Activated CD4-positive, alpha-beta memory T cell treated with anti-CD3 and anti-CD28 coated beads for 36 hours (primary cell): ENCODE measurements at regions of chr7 and their contacts with region 1.

Region 1: DNA sequence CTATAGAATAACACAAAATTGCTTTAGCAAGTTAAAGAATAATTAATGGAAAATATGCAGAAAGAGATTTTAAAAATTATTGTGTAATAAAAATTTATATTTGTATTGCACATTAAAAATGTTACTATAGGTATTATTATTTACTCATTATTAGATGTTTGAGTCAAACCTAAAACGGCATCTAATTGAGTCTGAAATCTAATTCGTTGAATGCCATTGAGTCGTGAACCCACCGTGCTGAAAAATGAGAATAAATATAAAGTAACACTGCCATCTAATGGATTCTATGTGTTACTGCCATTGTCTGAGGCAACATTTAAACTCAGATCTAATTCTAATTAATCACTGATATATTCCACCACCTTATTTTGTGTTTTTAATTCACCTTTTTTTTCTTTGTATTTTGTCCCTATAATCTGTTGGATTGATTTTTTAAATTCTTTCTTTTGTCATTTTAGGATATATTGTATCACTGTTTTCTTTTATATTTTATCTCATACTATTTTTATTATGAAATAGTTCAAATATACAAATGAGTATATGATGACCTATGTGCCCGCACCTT is 62.2 kb downstream of the SAMD9 start:
- DNase-seq: no peak
- H3K4me3 Mint-ChIP-seq: no peak overlapping the region
- H3K27ac Mint-ChIP-seq: no peak overlapping the region
- H3K4me1 Mint-ChIP-seq: peaks cover 17% of the 10 kb centered on the region
- H3K27me3 Mint-ChIP-seq: peaks cover 6% of the 10 kb centered on the region

Region 2: DNA sequence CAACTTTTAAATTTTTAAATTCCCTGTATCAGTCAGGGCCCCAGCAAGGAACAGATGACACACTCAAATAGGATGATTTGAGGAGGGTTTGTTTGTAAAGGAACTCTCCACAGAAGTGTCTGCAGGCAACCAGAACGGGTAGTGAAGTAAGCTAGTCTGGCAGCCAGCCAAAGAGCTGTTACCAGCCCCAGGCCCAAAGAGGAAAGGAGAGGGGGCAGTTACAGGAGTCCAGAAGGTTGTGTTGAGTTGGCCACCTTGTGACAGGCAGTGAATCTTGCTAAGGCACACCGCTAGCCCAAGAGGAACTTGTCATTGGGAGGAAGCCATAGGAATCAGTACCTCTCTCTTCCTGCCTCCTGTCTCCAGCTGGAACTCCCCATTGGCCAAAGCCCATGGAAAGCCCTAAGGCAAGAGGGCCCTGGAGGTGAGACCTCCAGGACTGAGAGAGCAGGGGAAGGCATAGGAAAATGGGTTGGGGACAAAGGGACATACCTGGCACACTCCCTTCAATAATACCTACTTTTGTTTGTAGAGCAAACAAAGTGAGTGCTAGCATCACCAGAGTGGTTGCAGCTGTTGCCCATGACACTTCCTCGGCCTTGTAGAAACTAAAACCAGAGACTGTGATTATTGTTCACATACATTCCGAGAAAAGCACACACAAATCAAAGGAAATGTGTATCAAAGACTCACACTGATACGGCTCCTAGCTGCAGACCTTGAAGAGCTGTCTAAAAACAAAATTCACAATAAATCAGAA is 633.8 kb before region 1 on chr7:
- CTCF ChIA-PET with region 1: no interaction called
- POLR2A ChIA-PET with region 1: no interaction called
- intact Hi-C with region 1: loop called (anchors 5 kb)
- DNase-seq: no peak
- H3K4me3 Mint-ChIP-seq: no peak overlapping the region
- H3K27ac Mint-ChIP-seq: no peak overlapping the region
- H3K4me1 Mint-ChIP-seq: peaks cover 10% of the 10 kb centered on the region
- H3K27me3 Mint-ChIP-seq: peaks cover 13% of the 10 kb centered on the region

Region 3: GRCh38 chr7:92621026-92621540 is 434.5 kb before region 1 on chr7:
- CTCF ChIA-PET with region 1: interaction called, 6 read pairs
- POLR2A ChIA-PET with region 1: no interaction called
- intact Hi-C with region 1: loop called (anchors 1 kb)
- DNase-seq: peak; percentile 86
- H3K4me3 Mint-ChIP-seq: peak overlapping the region; percentile 49
- H3K27ac Mint-ChIP-seq: peak overlapping the region; percentile 93
- H3K4me1 Mint-ChIP-seq: peaks cover 53% of the 10 kb centered on the region
- H3K27me3 Mint-ChIP-seq: no peaks in the 10 kb centered on the region

Region 4: DNA sequence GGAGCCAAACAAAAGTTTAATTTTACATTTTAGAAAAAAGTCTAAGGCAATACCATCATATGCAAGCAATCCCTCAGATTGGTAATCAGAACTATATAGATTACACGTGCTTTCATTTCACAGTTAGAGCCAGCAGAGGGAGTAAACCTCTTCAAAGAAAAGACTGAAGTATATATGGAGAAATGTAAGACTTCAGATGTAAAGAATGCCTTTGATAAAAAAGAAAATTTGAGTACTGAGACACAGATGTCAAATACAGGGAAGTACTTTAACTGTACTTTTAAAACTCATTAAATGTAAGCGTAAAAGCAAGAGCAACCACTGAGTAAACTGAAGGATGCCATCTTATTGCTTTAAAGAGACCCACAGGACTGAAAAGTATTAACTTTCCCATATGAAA is 364.0 kb before region 1 on chr7:
- CTCF ChIA-PET with region 1: no interaction called
- POLR2A ChIA-PET with region 1: no interaction called
- intact Hi-C with region 1: loop called (anchors 2 kb)
- DNase-seq: no peak
- H3K4me3 Mint-ChIP-seq: no peak overlapping the region
- H3K27ac Mint-ChIP-seq: peak overlapping the region; percentile 83
- H3K4me1 Mint-ChIP-seq: peaks cover 60% of the 10 kb centered on the region
- H3K27me3 Mint-ChIP-seq: no peaks in the 10 kb centered on the region

Region 5: GRCh38 chr7:92843034-92843760 is 212.4 kb before region 1 on chr7:
- CTCF ChIA-PET with region 1: no interaction called
- POLR2A ChIA-PET with region 1: no interaction called
- intact Hi-C with region 1: no loop called
- DNase-seq: no peak
- H3K4me3 Mint-ChIP-seq: no peak overlapping the region
- H3K27ac Mint-ChIP-seq: no peak overlapping the region
- H3K4me1 Mint-ChIP-seq: peaks cover 8% of the 10 kb centered on the region
- H3K27me3 Mint-ChIP-seq: peaks cover 9% of the 10 kb centered on the region

Region 6: DNA sequence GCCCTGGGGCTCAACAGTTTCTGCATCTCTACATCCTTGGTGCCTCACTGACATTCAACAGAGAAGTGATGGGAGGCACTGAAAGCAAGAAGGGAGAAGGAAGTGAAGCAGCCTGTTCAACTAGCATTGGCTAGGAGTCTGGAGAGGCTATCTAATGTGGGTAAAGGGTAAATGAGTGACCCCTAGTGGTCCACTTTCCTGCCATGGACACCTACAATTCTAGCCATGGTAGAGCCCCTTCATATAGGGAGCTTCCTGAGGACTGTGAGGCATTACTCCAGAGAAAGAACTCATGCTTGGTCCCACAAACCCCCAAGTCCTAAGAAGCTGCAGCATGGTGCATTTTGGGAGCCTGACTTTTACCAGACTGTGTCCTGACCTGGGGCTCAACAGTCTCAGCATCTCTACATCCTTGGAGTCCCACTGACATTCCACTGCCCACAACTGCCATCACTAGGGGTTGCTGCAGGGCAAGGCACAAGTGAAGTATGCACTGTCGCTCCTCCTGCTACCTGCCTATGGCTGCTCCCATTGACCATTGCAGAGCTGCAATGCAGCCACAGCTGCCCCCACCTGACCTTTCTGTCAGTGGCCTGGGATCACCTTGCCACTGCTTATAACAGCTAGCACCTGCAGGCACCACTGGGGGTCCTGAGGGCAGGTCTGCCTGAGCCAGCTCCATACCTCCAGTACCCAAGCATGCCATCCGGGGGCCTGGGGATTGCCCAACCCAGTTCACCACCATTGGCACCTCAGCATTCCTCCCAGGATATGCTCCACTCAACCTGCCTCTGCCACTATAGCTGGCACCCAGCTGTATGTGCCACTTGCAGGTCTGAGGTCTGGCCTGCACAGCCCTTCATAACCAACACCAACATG is 175.2 kb before region 1 on chr7:
- CTCF ChIA-PET with region 1: no interaction called
- POLR2A ChIA-PET with region 1: no interaction called
- intact Hi-C with region 1: loop called (anchors 1 kb)
- DNase-seq: peak; percentile 44
- H3K4me3 Mint-ChIP-seq: no peak overlapping the region
- H3K27ac Mint-ChIP-seq: no peak overlapping the region
- H3K4me1 Mint-ChIP-seq: peaks cover 36% of the 10 kb centered on the region
- H3K27me3 Mint-ChIP-seq: no peaks in the 10 kb centered on the region

Region 7: GRCh38 chr7:93327006-93327633 is 271.5 kb after region 1 on chr7:
- CTCF ChIA-PET with region 1: no interaction called
- POLR2A ChIA-PET with region 1: no interaction called
- intact Hi-C with region 1: no loop called
- DNase-seq: no peak
- H3K4me3 Mint-ChIP-seq: no peak overlapping the region
- H3K27ac Mint-ChIP-seq: no peak overlapping the region
- H3K4me1 Mint-ChIP-seq: no peaks in the 10 kb centered on the region
- H3K27me3 Mint-ChIP-seq: no peaks in the 10 kb centered on the region